ENCODE measurements at regions of chr10 and their contacts with region 1.

Region 1: GRCh38 chr10:51269816-51270215 is 195.5 kb downstream of the PRKG1 start:
- DNase-seq: no peak
- ATAC-seq: no peak
- H3K4me3 ChIP-seq: no peak overlapping the region
- H3K27ac ChIP-seq: no peak overlapping the region
- H3K4me1 ChIP-seq: peaks cover 0 to 6% of the 10 kb centered on the region in 2 donors
- H3K27me3 ChIP-seq: no peaks in the 10 kb centered on the region

Region 2: DNA sequence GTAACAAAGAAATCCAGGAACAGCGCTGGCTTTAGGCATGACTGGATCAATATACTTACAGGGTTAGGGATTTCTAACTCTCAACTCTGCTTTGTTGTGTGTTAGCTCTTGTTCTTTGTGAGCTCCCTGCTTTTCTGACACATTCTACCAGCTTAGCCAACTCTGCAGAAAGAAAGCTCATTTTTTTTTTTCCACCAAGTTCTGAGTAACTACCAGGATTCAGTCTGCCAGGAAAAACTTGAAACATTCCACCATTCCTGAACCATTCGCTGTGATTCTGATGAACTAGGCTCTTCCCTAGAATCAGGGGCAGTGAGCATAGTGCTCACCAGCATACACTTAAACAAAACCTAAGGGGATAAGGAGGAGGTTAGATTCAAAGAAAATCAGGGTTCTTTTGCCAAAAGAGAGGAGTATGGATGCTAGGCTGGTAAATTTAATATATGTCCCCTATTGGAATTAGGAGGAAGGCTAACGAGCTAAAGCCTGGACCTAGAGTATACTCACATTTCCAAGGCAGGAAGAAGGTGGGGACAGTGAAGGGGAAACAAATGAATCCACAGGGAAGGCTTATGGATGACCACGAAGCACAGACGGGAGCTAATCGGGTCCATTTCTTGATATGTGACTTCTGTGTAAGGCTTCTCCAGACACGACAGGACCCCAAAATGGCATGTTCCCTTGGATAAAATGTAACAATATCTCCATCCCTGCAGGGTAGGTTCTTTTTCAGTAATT is 12.1 kb before region 1 on chr10:
- intact Hi-C with region 1: loop called in 1 of 2 experiments (anchors 1 kb)
- DNase-seq: no peak
- ATAC-seq: peak; percentile 73
- H3K4me3 ChIP-seq: no peak overlapping the region
- H3K27ac ChIP-seq: peak overlapping the region; percentile 68 to 97
- H3K4me1 ChIP-seq: peaks cover 3 to 6% of the 10 kb centered on the region in 2 donors
- H3K27me3 ChIP-seq: no peaks in the 10 kb centered on the region